Activated CD4-positive, alpha-beta T cell treated with anti-CD3 and anti-CD28 coated beads for 36 hours (primary cell): ENCODE measurements at regions of chr6 and their contacts with region 1.

Region 1: DNA sequence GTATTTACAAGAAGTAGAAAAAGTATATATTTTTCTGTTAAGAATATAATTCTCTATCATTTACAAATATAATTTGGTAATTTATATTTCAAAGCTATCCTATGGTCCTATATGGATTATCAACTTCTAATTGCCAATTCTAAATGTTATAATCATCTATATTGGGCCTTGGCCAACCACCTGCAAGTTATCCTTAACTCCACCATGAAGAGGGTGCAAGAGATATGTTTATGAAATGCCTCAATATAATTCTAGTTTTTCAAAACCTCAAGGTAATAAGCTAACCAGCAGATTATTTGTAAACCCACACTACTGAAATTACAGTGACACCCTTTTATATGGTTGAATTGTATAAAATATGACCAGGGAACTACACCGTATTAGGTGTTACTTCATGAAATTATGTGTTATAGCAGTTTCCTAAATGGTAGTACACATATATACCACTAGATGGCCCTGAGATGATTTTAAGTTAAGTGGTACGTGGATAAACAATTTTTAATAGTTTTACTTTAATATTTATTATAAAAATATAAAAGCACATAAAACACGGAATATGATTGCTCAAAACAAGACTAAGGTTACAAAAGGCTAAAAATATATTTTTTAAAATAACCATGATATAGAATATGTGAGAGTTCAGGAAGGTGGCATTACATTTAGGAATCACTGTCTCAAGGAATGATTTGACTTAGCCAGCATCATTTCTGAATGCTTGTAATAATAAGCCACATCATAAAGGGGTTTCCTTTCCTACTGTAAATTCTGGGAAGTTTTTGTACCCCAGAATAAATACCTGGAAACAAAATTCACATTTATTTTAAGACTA is 9.8 kb upstream of the PNISR start:
- DNase-seq: no peak
- ATAC-seq: peak; percentile 33
- H3K4me3 Mint-ChIP-seq: no peak overlapping the region
- H3K27ac Mint-ChIP-seq: no peak overlapping the region
- H3K4me1 Mint-ChIP-seq: no peaks in the 10 kb centered on the region
- H3K27me3 Mint-ChIP-seq: no peaks in the 10 kb centered on the region

Region 2: GRCh38 chr6:99393698-99394531 is 41.0 kb before region 1 on chr6 and contains the start of gene COQ3:
- CTCF ChIA-PET with region 1: interaction called, 13 read pairs
- POLR2A ChIA-PET with region 1: no interaction called
- intact Hi-C with region 1: no loop called
- DNase-seq: peak; percentile 80
- ATAC-seq: peak; percentile 87
- H3K4me3 Mint-ChIP-seq: peak within 1 kb of the TSS; percentile 94
- H3K27ac Mint-ChIP-seq: peak within 1 kb of the TSS; percentile 84
- H3K4me1 Mint-ChIP-seq: peaks cover 14% of the 10 kb centered on the region
- H3K27me3 Mint-ChIP-seq: no peaks in the 10 kb centered on the region
- total RNA-seq, gene COQ3: 13.5 to 23.4 TPM

Region 3: GRCh38 chr6:99458319-99458718 is 23.4 kb after region 1 on chr6:
- CTCF ChIA-PET with region 1: no interaction called
- POLR2A ChIA-PET with region 1: no interaction called
- intact Hi-C with region 1: no loop called
- DNase-seq: peak; percentile 9
- ATAC-seq: no peak
- H3K4me3 Mint-ChIP-seq: no peak overlapping the region
- H3K27ac Mint-ChIP-seq: no peak overlapping the region
- H3K4me1 Mint-ChIP-seq: no peaks in the 10 kb centered on the region
- H3K27me3 Mint-ChIP-seq: no peaks in the 10 kb centered on the region

Region 4: GRCh38 chr6:99568103-99568933 is 133.4 kb after region 1 on chr6 and contains the start of gene CCNC:
- CTCF ChIA-PET with region 1: no interaction called
- POLR2A ChIA-PET with region 1: no interaction called
- intact Hi-C with region 1: no loop called
- DNase-seq: peak; percentile 94
- ATAC-seq: peak; percentile 98
- H3K4me3 Mint-ChIP-seq: peak within 1 kb of the TSS; percentile 97
- H3K27ac Mint-ChIP-seq: peak within 1 kb of the TSS; percentile 98
- H3K4me1 Mint-ChIP-seq: peaks cover 25% of the 10 kb centered on the region
- H3K27me3 Mint-ChIP-seq: no peaks in the 10 kb centered on the region
- total RNA-seq, gene CCNC: 50.7 to 67.3 TPM